MCF 10A (cell line): ENCODE measurements at regions of chr10 and their contacts with region 1.

Region 1: DNA sequence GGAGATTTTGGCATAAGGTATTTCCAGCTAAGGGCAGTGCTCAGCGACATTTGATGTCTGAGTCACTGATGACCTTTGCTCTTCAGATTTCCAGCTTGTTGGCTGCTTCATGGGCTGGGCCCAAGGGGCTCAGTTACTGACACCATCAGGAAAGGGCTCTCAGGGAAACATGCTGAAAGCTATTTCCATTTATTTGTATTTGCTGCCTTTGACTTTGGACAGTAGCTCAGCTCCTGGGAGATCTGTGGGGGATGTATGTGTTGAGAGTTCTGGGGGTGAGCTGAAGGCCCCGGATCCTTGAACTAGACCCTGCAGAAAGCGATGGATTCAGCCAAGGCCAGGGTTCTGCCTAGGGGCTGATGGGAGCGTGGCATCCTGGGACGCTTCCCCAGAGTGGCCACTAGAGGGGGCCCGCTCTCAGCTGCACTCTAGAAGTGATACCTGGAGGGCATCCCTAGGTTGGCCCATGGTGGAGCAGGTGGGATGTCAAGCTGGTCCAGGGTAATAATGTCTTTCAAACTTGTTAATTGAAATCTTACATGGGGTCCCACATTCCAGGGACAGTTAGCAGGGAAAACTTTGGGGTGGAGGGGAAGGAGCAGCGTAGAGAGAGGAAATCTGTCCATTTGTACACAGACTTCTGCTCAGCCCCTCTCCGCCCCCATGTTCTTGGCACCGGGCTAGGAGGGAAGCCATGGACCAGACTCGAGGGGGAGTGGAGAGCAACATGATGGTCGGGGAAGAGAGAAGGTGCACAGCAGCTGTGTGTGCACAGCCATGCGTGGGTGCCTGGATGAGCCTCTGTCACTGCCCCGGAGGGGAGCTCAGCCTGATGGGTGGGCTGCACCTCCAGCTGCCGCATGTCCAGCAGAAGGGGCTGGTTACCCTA is 3.0 kb upstream of the BTBD16 start:
- DNase-seq: peak; percentile 49
- H3K4me3 Mint-ChIP-seq: no peak overlapping the region
- H3K27ac Mint-ChIP-seq: no peak overlapping the region
- H3K4me1 Mint-ChIP-seq: peaks cover 32% of the 10 kb centered on the region
- H3K27me3 Mint-ChIP-seq: no peaks in the 10 kb centered on the region
- CTCF ChIP-seq: peak; percentile 82

Region 2: DNA sequence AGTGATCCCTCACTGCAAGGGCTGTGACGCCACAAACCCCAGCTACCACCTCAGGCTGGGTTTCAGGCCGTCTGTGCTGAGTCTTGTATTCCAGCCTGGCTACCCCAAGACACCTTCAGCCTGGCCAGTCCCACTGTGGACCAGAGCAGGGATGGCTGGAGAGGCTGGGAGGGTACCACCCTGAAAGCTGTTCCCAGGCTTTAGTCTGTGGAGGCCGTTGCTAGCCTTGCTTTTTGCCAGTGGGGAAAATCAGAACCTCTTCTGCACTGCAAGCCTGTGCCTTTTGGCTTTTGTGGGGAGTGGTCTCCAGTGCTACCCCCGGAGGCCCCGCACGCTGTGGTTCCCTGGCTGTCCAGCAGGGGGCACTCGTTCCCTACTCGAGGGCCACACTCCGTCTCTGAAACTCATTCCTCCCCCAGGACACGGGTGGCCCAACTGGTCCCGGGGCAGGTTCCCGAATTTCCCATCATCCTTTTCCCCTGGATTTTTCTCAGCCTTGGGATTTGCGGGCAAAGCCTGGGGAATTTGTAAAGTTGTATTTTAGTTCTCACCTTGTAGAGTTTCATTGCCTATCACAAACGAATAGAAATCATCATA is 125.4 kb before region 1 on chr10:
- CTCF ChIA-PET with region 1: no interaction called
- POLR2A ChIA-PET with region 1: no interaction called
- intact Hi-C with region 1: loop called (anchors 10 kb)
- DNase-seq: no peak
- H3K4me3 Mint-ChIP-seq: no peak overlapping the region
- H3K27ac Mint-ChIP-seq: peak overlapping the region; percentile 59
- H3K4me1 Mint-ChIP-seq: peaks cover 39% of the 10 kb centered on the region
- H3K27me3 Mint-ChIP-seq: no peaks in the 10 kb centered on the region
- CTCF ChIP-seq: peak; percentile 99

Region 3: GRCh38 chr10:122279725-122280141 is 11.6 kb after region 1 on chr10:
- CTCF ChIA-PET with region 1: interaction called, 24 read pairs
- POLR2A ChIA-PET with region 1: interaction called, 3 read pairs
- intact Hi-C with region 1: no loop called
- DNase-seq: peak; percentile 71
- H3K4me3 Mint-ChIP-seq: no peak overlapping the region
- H3K27ac Mint-ChIP-seq: no peak overlapping the region
- H3K4me1 Mint-ChIP-seq: peaks cover 14% of the 10 kb centered on the region
- H3K27me3 Mint-ChIP-seq: no peaks in the 10 kb centered on the region
- CTCF ChIP-seq: peak; percentile 66